ENCODE measurements at regions of chr19 and their contacts with region 1.

Region 1: DNA sequence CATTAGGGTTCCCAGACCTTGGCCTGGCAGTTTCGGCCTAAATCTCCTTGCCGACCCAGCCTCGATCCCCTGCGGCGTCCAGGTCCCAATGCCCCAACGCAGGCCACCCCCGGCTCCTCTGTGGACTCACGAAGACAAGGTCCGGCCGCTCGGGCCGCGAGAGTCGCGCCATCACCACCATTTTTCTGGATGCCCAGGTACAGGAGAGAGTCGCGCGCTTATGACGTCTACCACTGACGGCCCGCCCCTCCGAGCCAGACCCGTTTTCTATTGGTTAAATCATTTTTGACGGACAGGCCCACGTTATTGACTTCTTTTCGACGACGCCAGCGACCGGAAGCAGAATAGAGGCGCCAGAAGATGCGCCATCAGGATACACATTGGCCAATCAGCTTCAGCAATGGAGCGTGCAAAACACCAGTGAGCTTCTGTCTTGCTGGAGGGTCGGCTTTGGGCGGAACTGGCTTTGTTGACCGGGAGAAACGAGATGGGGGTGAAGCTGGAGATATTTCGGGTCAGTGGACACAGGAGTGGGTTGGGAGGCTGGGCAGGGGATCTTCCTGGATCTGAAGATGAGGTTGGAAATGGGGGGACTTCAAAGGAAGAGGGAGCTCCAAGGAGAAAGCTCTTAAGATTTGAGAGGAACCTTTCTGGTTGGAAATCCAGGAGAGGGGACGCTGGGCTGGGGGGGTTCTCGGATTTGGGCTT is at the starts of genes PET100 and XAB2:
- DNase-seq: peak; percentile 98 to 99
- ATAC-seq: peak; percentile 100
- H3K4me3 ChIP-seq: peak within 1 kb of the TSS; percentile 83 to 100 (median 95)
- H3K27ac ChIP-seq: peak within 1 kb of the TSS; percentile 80 to 92 (median 88)
- H3K4me1 ChIP-seq: peaks cover 18 to 27% of the 10 kb centered on the region in 2 donors
- H3K27me3 ChIP-seq: no peaks in the 10 kb centered on the region
- CTCF ChIP-seq: no peak
- POLR2A ChIP-seq: peak; percentile 50 to 52
- total RNA-seq, gene PET100: 9.5 to 15.1 (median 12.9) TPM
- total RNA-seq, gene XAB2: 29.6 to 51.2 (median 31.1) TPM

Region 2: GRCh38 chr19:7488736-7489353 is 140.7 kb before region 1 on chr19 and contains the start of gene PEX11G:
- in situ Hi-C with region 1: no loop called
- intact Hi-C with region 1: loop called (anchors 2 kb)
- DNase-seq: peak; percentile 73 to 81
- ATAC-seq: peak; percentile 94 to 95
- H3K4me3 ChIP-seq: peak within 1 kb of the TSS; percentile 65 to 87 (median 67)
- H3K27ac ChIP-seq: peak within 1 kb of the TSS; percentile 73 to 90 (median 84)
- H3K4me1 ChIP-seq: peaks cover under 1 to 8% of the 10 kb centered on the region in 2 donors
- H3K27me3 ChIP-seq: no peaks in the 10 kb centered on the region
- CTCF ChIP-seq: no peak
- POLR2A ChIP-seq: peak; percentile 52 to 62
- total RNA-seq, gene PEX11G: 0.51 to 1.4 (median 1.1) TPM in 3 of 4 donors, not detected in the other

Region 3: GRCh38 chr19:7522072-7522922 is 107.2 kb before region 1 on chr19 and contains the start of gene MCOLN1:
- in situ Hi-C with region 1: no loop called
- intact Hi-C with region 1: loop called (anchors 1 kb)
- DNase-seq: peak; percentile 99
- ATAC-seq: peak; percentile 92 to 93
- H3K4me3 ChIP-seq: peak within 1 kb of the TSS; percentile 67 to 95 (median 85)
- H3K27ac ChIP-seq: peak within 1 kb of the TSS; percentile 48 to 84 (median 70)
- H3K4me1 ChIP-seq: peaks cover 15 to 19% of the 10 kb centered on the region in 2 donors
- H3K27me3 ChIP-seq: no peaks in the 10 kb centered on the region
- CTCF ChIP-seq: peak in 2 of 5 experiments; percentile 66 to 73
- POLR2A ChIP-seq: peak; percentile 52 to 71
- total RNA-seq, gene MCOLN1: 9.2 to 13.6 (median 11.5) TPM

Region 4: GRCh38 chr19:7535035-7535992 is 94.2 kb before region 1 on chr19 and contains the start of gene PNPLA6:
- in situ Hi-C with region 1: no loop called
- intact Hi-C with region 1: loop called (anchors 1 kb)
- DNase-seq: peak; percentile 88 to 93
- ATAC-seq: peak; percentile 82 to 84
- H3K4me3 ChIP-seq: peak within 1 kb of the TSS; percentile 88 to 92 (median 90)
- H3K27ac ChIP-seq: peak within 1 kb of the TSS; percentile 86 to 90 (median 88)
- H3K4me1 ChIP-seq: peaks cover 15 to 23% of the 10 kb centered on the region in 2 donors
- H3K27me3 ChIP-seq: no peaks in the 10 kb centered on the region
- CTCF ChIP-seq: no peak
- POLR2A ChIP-seq: peak; percentile 49 to 62
- total RNA-seq, gene PNPLA6: 61.4 to 101 (median 75.1) TPM

Region 5: DNA sequence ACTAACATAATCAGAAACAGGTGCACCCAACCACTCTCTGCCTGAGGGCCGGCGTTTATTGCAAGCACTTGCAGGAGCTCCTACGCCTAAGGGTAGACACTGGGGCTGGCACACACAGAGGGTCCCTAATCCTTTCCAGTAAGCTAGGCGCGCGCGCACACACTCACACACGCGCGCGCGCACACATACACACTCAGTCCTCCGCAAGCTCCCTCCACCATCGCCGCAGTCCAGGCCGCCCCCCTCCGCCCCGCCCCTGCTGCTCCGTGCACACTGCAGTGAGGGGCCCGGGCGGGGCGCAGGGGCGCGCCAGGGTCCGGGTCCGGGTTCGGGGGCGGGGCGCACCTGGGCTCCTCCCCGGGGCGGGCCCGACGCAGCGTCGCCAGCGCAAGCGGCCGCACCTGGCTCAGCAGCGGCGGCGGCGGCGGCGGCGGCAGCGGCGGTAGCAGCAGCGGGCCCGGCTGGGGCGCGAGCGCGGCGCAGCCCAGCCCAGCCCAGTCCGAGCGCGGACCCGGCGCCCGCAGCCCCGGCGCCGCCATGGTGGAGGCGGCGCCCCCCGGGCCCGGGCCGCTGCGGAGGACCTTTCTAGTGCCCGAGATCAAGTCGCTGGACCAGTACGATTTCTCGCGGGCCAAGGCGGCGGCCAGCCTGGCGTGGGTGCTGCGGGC is 33.9 kb before region 1 on chr19 and contains the start of gene CAMSAP3:
- in situ Hi-C with region 1: no loop called
- intact Hi-C with region 1: no loop called
- DNase-seq: no peak
- ATAC-seq: no peak
- H3K4me3 ChIP-seq: no peak within 1 kb of the TSS
- H3K27ac ChIP-seq: no peak within 1 kb of the TSS
- H3K4me1 ChIP-seq: no peaks in the 10 kb centered on the region
- H3K27me3 ChIP-seq: peaks cover 40 to 43% (median 43%) of the 10 kb centered on the region in 3 donors
- CTCF ChIP-seq: no peak
- POLR2A ChIP-seq: no peak
- total RNA-seq, gene CAMSAP3: 0.15 to 0.16 TPM in 2 of 4 donors, not detected in the others

Region 6: GRCh38 chr19:7652061-7652641 is 22.6 kb after region 1 on chr19:
- in situ Hi-C with region 1: no loop called
- intact Hi-C with region 1: loop called (anchors 1 kb)
- DNase-seq: peak; percentile 74 to 88
- ATAC-seq: peak; percentile 100
- H3K4me3 ChIP-seq: peak overlapping the region in 2 of 4 donors; percentile 15 to 34
- H3K27ac ChIP-seq: peak overlapping the region; percentile 50 to 84 (median 70)
- H3K4me1 ChIP-seq: peaks cover 0 to 4% of the 10 kb centered on the region in 2 donors
- H3K27me3 ChIP-seq: no peaks in the 10 kb centered on the region
- CTCF ChIP-seq: peak; percentile 93 to 99 (median 98)
- POLR2A ChIP-seq: no peak

Region 7: DNA sequence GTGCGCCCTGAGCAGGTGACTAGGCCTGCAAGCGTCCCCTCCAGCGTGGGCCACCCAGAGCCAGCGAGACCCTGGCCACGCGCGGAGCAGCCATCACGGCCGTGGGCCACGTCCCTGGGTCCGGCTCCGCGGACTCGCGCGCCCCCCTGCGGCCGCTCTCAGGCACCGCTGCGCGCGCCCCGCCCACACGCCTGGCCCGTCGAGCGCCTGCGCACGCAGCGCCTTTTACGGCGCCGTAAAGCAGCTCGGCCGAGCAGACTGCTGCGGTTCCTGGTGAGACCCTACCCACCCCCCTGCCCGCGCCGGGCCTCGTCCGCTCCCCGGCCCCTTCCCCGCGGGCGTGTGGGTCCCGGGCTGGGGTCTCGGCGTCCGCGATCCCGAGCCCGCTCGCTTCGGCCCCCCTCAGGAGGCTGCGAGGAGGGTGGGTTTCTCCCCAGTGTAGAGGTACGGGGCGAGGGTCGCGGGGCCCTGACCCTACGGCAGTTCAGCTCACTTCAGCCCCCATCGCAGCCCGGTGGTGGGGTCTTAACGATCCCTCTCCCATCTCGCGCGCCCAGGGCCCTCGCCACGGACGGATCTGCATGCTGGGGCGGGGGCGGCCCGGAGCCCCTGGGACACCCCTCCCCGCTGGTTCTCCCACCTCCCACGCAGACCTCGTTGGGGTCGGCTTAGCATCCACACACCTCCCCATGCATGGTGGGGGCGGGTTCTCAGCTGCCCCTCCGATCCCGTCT is 51.3 kb after region 1 on chr19 and contains the start of gene TRAPPC5:
- in situ Hi-C with region 1: no loop called
- intact Hi-C with region 1: loop called (anchors 1 kb)
- DNase-seq: peak; percentile 55 to 77
- ATAC-seq: peak; percentile 86 to 91
- H3K4me3 ChIP-seq: peak within 1 kb of the TSS; percentile 91 to 100 (median 94)
- H3K27ac ChIP-seq: peak within 1 kb of the TSS; percentile 83 to 94 (median 92)
- H3K4me1 ChIP-seq: peaks cover 4 to 9% of the 10 kb centered on the region in 2 donors
- H3K27me3 ChIP-seq: peaks cover 0 to 10% (median 0%) of the 10 kb centered on the region in 3 donors
- CTCF ChIP-seq: peak in 4 of 5 experiments; percentile 80 to 100 (median 99)
- POLR2A ChIP-seq: peak; percentile 60 to 77
- total RNA-seq, gene TRAPPC5: 109 to 146 (median 126) TPM

Region 8: GRCh38 chr19:7903244-7904073 is 274.0 kb after region 1 on chr19 and contains the start of gene MAP2K7:
- in situ Hi-C with region 1: no loop called
- intact Hi-C with region 1: loop called (anchors 1 kb)
- DNase-seq: peak; percentile 99 to 100
- ATAC-seq: peak; percentile 95 to 97
- H3K4me3 ChIP-seq: peak within 1 kb of the TSS; percentile 82 to 97 (median 90)
- H3K27ac ChIP-seq: peak within 1 kb of the TSS; percentile 86 to 92 (median 90)
- H3K4me1 ChIP-seq: peaks cover 22 to 37% of the 10 kb centered on the region in 2 donors
- H3K27me3 ChIP-seq: no peaks in the 10 kb centered on the region
- CTCF ChIP-seq: peak in 4 of 5 experiments; percentile 22 to 55 (median 38)
- POLR2A ChIP-seq: peak; percentile 84 to 86
- total RNA-seq, gene MAP2K7: 17.7 to 41.7 (median 32.9) TPM

Region 9: DNA sequence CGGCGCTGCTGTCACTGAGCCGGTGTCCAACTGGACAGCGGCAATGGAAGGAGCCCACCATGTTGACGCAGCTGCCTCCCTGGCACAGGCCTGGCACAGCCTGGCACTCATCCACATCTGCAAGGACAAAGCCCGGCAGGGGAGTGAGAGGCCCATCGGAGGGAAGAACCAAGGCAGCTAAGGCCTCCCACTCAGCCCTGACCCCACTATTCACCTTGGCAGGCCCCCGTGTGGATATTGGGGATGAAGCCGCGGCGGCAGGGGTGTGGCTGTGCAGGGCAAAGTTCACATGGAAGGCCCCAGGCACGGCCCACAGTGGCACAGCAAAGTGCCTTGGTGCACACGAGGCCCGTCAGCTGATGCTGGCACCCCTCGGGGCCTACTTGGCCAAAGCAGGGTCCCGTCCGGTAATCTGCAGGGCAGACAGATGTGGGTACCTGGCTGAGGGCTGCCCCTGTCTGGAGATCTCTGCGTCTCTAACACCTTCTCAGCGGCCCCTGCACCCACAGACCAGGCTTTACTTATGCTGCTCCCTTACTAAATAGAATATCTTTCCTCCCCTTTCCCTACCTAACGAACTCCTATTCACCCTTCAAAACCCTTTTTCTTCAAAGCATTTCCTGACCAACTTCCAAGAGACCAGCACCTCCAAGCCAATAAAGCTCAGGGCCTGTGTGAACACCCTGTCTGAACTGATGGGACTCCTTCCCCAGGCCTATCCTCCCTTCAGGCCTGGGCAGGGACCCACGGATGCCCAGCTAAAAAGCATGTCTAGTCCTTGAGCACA is 512.4 kb after region 1 on chr19:
- in situ Hi-C with region 1: no loop called
- intact Hi-C with region 1: no loop called
- DNase-seq: no peak
- ATAC-seq: no peak
- H3K4me3 ChIP-seq: no peak overlapping the region
- H3K27ac ChIP-seq: no peak overlapping the region
- H3K4me1 ChIP-seq: no peaks in the 10 kb centered on the region
- H3K27me3 ChIP-seq: peaks cover under 1 to 6% (median 3%) of the 10 kb centered on the region in 3 donors
- CTCF ChIP-seq: no peak
- POLR2A ChIP-seq: no peak

Measured in gastrocnemius medialis (tissue), 4 donors.